GM23248 (cell line): ENCODE measurements at regions of chr4 and their contacts with region 1.

Region 1: GRCh38 chr4:107183155-107183774 is 147.2 kb upstream of the DKK2 start:
- DNase-seq: peak; percentile 80
- H3K4me3 ChIP-seq: no peak overlapping the region
- H3K27ac ChIP-seq: no peak overlapping the region
- H3K4me1 ChIP-seq: no peaks in the 10 kb centered on the region
- H3K27me3 ChIP-seq: no peaks in the 10 kb centered on the region

Region 2: GRCh38 chr4:107006218-107006617 is 177.0 kb before region 1 on chr4:
- in situ Hi-C with region 1: no loop called
- DNase-seq: no peak
- H3K4me3 ChIP-seq: no peak overlapping the region
- H3K27ac ChIP-seq: no peak overlapping the region
- H3K4me1 ChIP-seq: no peaks in the 10 kb centered on the region
- H3K27me3 ChIP-seq: no peaks in the 10 kb centered on the region

Region 3: GRCh38 chr4:107044170-107044569 is 139.1 kb before region 1 on chr4:
- in situ Hi-C with region 1: loop called (anchors 10 kb)
- DNase-seq: peak; percentile 35
- H3K4me3 ChIP-seq: no peak overlapping the region
- H3K27ac ChIP-seq: no peak overlapping the region
- H3K4me1 ChIP-seq: no peaks in the 10 kb centered on the region
- H3K27me3 ChIP-seq: no peaks in the 10 kb centered on the region; the same call in 1 of the 2 replicates